ENCODE measurements at regions of chr7 and their contacts with region 1.

Region 1: DNA sequence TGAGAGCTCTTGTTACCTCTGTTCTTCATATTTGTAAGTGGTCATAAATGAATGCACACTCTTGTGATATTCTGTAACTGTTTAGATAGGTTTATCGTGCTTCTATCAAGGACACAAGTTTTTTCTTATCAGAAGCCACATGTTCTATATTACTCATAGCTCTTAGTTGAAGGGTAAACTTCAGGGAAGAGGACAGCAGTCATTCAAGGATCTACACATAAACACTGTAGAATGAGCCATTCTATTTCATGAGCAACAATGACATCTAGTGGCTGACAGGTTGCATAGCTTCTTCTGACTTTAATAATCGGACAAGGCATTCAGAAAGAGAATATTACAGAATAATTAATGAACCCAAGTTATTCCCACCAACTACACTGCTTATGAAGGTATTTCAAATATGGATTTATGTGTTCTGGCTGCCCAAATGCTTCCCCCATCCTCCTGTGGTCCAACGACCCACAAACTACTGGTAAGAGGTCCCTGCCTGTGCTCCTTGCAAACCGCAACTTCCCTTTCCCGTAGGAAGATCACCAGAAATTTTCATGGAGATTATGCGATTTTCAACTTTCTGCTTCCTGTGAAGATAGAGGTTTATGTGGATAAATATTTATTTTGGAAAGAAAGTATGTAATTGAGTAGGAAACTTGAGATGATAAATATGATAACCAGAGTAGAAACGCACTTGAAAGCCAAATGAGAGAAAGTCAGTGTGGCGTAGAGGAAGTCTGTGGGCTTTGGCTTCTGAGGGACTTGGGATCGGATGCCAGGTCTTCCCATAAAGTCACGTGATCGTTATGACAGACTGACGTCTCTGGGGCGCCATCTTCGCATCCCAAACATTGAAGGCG is 16.8 kb upstream of the ABCB5 start:
- DNase-seq: no peak
- ATAC-seq: peak; percentile 71
- H3K4me3 Mint-ChIP-seq: no peak overlapping the region
- H3K27ac Mint-ChIP-seq: no peak overlapping the region
- H3K4me1 Mint-ChIP-seq: no peaks in the 10 kb centered on the region
- H3K27me3 Mint-ChIP-seq: peaks cover 20% of the 10 kb centered on the region

Region 2: GRCh38 chr7:19708397-19709248 is 890.1 kb before region 1 on chr7 and contains the start of gene POLR1F:
- CTCF ChIA-PET with region 1: interaction called, 78 read pairs
- POLR2A ChIA-PET with region 1: no interaction called
- intact Hi-C with region 1: loop called (anchors 1 kb)
- DNase-seq: peak; percentile 96
- ATAC-seq: peak; percentile 96
- H3K4me3 Mint-ChIP-seq: peak within 1 kb of the TSS; percentile 89
- H3K27ac Mint-ChIP-seq: peak within 1 kb of the TSS; percentile 90
- H3K4me1 Mint-ChIP-seq: peaks cover 41% of the 10 kb centered on the region
- H3K27me3 Mint-ChIP-seq: no peaks in the 10 kb centered on the region
- total RNA-seq, gene POLR1F: 25.8 to 32.2 TPM

Region 3: GRCh38 chr7:19713676-19714075 is 885.0 kb before region 1 on chr7:
- CTCF ChIA-PET with region 1: interaction called, 78 read pairs
- POLR2A ChIA-PET with region 1: no interaction called
- intact Hi-C with region 1: loop called (anchors 1 kb)
- DNase-seq: peak; percentile 55
- ATAC-seq: no peak
- H3K4me3 Mint-ChIP-seq: no peak overlapping the region
- H3K27ac Mint-ChIP-seq: no peak overlapping the region
- H3K4me1 Mint-ChIP-seq: peaks cover 15% of the 10 kb centered on the region
- H3K27me3 Mint-ChIP-seq: no peaks in the 10 kb centered on the region

Region 4: DNA sequence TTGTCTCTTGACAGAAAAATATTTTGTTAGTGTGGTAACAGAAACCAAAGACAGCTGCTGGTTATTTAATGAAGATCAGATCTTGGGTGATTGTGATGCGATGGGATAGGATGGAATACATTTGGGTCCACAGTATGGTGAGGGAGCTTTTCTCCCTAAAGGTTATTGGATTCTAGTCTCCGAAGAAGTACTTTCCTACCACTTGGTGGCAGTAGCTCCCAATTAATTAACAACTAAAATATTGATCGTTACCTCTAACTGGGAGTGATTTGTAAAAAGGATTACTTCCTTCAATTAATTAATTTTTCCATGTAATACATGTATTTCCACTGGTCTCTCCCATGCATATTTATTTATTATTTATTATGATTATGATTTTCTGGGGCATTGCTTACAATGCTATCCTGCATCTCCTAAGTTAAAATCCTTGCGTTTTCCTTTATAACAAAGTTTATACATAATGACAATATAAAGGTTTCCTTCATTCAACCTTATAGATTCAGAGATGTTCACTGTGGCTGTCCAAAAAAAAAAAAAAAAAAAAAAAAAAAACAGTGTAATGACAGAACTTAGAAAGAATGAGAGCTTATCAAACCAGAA is 850.8 kb before region 1 on chr7:
- CTCF ChIA-PET with region 1: interaction called, 15 read pairs
- POLR2A ChIA-PET with region 1: interaction called, 3 read pairs
- intact Hi-C with region 1: loop called (anchors 1 to 2 kb)
- DNase-seq: no peak
- ATAC-seq: no peak
- H3K4me3 Mint-ChIP-seq: no peak overlapping the region
- H3K27ac Mint-ChIP-seq: no peak overlapping the region
- H3K4me1 Mint-ChIP-seq: no peaks in the 10 kb centered on the region
- H3K27me3 Mint-ChIP-seq: peaks cover 5% of the 10 kb centered on the region

Region 5: DNA sequence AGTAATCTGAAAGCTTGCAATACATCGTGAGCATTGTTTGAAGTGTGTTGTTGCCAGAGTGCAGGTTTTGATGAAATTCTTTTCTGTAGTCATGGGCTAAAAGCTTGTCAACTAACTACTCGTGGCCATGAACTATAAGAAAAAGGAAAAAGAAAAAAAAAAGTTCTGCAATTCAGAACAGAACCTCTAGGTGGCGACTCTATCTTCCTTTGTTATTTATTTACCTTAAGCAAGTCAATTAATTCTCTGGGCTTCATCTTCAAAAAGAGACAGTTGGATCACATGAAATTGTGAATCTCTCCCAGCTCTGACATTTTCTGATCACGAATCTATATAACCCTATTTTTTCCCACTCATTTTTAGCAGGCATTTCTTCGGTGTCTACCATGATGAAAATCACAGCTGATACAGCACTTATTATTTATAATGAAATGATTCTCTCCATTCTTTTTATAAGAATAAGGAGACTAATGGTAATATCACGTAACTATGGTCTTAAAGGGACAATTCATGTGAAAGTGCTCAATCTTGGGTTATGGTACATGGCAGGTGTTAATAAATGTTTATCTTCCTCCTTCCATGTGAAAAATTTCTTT is 844.1 kb before region 1 on chr7:
- CTCF ChIA-PET with region 1: interaction called, 7 read pairs
- POLR2A ChIA-PET with region 1: no interaction called
- intact Hi-C with region 1: loop called in 1 of 2 experiments (anchors 2 kb)
- DNase-seq: no peak
- ATAC-seq: no peak
- H3K4me3 Mint-ChIP-seq: no peak overlapping the region
- H3K27ac Mint-ChIP-seq: no peak overlapping the region
- H3K4me1 Mint-ChIP-seq: no peaks in the 10 kb centered on the region
- H3K27me3 Mint-ChIP-seq: peaks cover 11% of the 10 kb centered on the region

Region 6: DNA sequence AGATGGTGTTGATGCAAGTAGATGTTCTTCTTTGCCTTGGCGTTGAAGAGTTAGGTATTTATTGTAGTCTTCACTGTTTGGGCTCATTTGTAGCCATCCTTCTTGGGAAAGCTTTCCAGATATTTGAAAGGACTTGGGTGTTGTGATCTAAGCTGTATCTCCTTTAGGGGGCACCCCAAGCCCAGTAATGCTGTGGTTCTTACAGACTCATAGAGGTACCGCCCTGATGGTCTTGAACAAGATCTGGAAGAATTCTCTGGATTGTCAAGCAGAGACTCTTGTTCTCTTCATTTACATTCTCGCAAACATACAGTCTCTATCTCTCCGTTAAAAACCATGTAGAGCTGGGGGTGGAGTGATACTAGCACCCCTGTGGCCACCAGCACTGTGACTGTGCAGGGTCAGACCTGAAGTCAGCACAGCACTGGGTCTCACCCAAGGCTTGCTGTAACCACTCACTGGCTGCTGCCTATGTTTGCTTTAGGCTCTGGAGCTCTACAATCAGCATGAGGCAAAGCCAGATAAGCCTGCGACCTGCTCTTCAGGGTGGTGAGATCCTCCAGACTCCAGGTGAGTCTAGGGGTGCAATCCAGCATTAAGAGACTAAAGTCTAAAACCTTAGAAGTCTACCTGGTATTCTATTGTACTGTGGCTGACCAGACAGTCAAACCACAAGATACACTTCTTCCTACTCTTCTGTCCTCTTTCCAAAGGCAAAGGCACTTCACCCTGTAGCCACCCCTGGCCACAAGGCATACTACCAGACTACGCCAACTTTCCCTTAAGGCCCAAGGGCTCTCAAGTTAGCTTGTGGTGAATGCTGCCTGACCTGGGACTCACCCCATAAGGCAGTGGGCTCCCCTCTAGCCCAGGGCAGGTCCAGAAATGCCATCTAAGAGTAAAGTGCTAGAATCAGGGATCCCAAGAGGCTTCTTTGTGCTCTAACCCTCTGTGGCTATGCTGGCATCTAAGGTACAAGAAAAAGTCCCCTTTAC is 615.5 kb before region 1 on chr7:
- CTCF ChIA-PET with region 1: interaction called, 4 read pairs
- POLR2A ChIA-PET with region 1: no interaction called
- intact Hi-C with region 1: loop called in 1 of 2 experiments (anchors 2 kb)
- DNase-seq: peak; percentile 29
- ATAC-seq: no peak
- H3K4me3 Mint-ChIP-seq: no peak overlapping the region
- H3K27ac Mint-ChIP-seq: no peak overlapping the region
- H3K4me1 Mint-ChIP-seq: no peaks in the 10 kb centered on the region
- H3K27me3 Mint-ChIP-seq: no peaks in the 10 kb centered on the region

Region 7: GRCh38 chr7:20330240-20330927 is 268.3 kb before region 1 on chr7 and contains the start of gene ITGB8:
- CTCF ChIA-PET with region 1: interaction called, 3 read pairs
- POLR2A ChIA-PET with region 1: no interaction called
- intact Hi-C with region 1: loop called in 1 of 2 experiments (anchors 5 kb)
- DNase-seq: peak; percentile 92
- ATAC-seq: peak; percentile 84
- H3K4me3 Mint-ChIP-seq: peak within 1 kb of the TSS; percentile 73
- H3K27ac Mint-ChIP-seq: peak within 1 kb of the TSS; percentile 40
- H3K4me1 Mint-ChIP-seq: peaks cover 20% of the 10 kb centered on the region
- H3K27me3 Mint-ChIP-seq: peaks cover 50% of the 10 kb centered on the region
- total RNA-seq, gene ITGB8: 0.07 TPM in 1 of 2 experiments, not detected in the other

Region 8: DNA sequence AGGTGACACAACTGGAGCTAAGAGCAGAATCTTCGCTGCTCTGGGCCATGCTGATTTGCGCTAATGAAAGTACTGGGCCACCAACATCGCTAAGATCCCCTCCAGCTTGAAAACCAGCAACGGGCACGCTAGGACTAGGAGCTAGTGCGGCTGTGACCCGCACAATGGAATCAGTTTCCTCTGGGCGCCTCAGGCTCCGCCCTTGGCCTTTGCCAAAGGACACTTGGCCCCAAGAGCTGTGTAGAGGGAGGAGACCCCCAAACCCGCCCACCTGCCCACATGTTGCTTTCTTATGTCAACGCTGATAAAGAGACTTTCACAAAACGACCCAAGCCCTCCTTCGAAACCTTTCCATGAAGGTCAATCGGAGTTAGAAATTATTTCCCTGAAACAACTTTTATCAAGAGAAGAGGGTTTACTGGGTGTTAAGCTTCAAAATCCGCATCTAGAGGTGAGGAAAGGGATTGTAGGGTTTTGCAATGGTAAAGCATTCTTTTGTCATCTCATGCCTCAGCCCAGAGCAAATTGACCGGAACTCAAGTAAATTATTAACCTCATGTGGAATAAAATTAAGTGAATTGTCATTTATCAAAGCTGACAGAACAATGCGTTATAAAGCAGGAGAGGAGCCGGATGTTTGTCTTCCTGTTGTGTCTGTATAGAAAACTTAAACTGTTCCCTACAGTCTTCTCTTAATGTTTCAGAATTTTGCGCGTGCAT is 26.1 kb after region 1 on chr7:
- CTCF ChIA-PET with region 1: no interaction called
- POLR2A ChIA-PET with region 1: no interaction called
- intact Hi-C with region 1: no loop called
- DNase-seq: no peak
- ATAC-seq: no peak
- H3K4me3 Mint-ChIP-seq: no peak overlapping the region
- H3K27ac Mint-ChIP-seq: no peak overlapping the region
- H3K4me1 Mint-ChIP-seq: no peaks in the 10 kb centered on the region
- H3K27me3 Mint-ChIP-seq: peaks cover 2% of the 10 kb centered on the region

Region 9: GRCh38 chr7:21054427-21055112 is 455.9 kb after region 1 on chr7:
- CTCF ChIA-PET with region 1: no interaction called
- POLR2A ChIA-PET with region 1: no interaction called
- intact Hi-C with region 1: no loop called
- DNase-seq: no peak
- ATAC-seq: no peak
- H3K4me3 Mint-ChIP-seq: no peak overlapping the region
- H3K27ac Mint-ChIP-seq: no peak overlapping the region
- H3K4me1 Mint-ChIP-seq: no peaks in the 10 kb centered on the region
- H3K27me3 Mint-ChIP-seq: peaks cover 5% of the 10 kb centered on the region

Region 10: DNA sequence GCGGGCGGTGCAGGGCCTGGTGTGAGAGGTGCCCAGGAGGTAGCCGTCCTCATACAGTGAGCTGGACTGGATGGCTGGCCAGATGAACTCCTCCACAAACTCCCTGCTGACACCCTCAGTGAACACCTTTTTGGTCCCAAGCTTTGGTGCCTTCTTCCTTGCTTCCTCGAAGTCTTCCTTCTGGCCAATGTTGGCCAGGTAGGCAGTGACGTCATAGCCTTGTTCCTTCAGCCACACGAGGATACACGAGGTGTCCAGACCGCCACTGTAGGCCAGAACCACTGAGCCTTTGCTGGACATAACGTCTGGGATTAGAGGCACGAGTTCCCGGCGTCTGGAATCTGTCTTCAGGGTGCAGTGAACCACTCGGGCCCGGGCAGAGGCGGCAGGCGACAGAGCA is 622.4 kb after region 1 on chr7:
- CTCF ChIA-PET with region 1: no interaction called
- POLR2A ChIA-PET with region 1: no interaction called
- intact Hi-C with region 1: no loop called
- DNase-seq: no peak
- ATAC-seq: no peak
- H3K4me3 Mint-ChIP-seq: no peak overlapping the region
- H3K27ac Mint-ChIP-seq: no peak overlapping the region
- H3K4me1 Mint-ChIP-seq: no peaks in the 10 kb centered on the region
- H3K27me3 Mint-ChIP-seq: peaks cover 2% of the 10 kb centered on the region

Region 11: GRCh38 chr7:21317966-21318915 is 719.6 kb after region 1 on chr7:
- CTCF ChIA-PET with region 1: no interaction called
- POLR2A ChIA-PET with region 1: no interaction called
- intact Hi-C with region 1: no loop called
- DNase-seq: no peak
- ATAC-seq: no peak
- H3K4me3 Mint-ChIP-seq: no peak overlapping the region
- H3K27ac Mint-ChIP-seq: no peak overlapping the region
- H3K4me1 Mint-ChIP-seq: peaks cover 3% of the 10 kb centered on the region
- H3K27me3 Mint-ChIP-seq: no peaks in the 10 kb centered on the region

Measured in activated CD4-positive, alpha-beta T cell treated with anti-CD3 and anti-CD28 coated beads for 36 hours (primary cell).